AG04450 (cell line): ENCODE measurements at regions of chr5 and their contacts with region 1.

Region 1: DNA sequence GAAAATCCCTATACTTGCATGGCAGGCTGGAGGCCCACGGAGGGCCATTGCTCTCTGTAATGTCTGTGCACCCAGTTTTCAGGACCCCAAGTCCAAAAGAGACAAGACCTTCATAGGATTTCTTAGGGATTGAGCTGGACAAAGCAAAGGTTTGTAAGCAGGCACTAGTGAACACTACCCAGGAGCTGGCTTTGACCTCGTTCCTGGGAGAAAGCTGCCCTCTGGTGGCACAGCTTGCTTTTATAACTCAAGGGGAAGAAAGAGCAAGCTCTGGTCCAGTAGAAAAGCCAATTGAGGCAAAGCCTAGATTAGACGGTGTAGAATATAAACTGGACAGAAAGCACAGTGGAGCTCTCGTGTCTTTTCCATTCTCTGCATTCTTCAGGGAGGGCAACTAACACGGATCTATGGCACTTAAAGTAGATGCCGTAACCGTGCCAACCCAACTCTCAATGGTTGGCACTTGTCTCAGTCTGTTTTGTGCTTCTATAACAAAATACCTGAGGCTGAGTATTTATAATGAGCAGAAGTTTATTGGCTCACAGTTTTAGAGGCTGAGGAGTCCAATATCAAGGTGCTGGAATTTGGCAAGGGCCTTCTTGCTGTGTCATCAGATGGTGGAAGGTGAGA is 7.9 kb downstream of the GABRP start:
- DNase-seq: peak; percentile 3
- H3K4me3 ChIP-seq: no peak overlapping the region
- H3K27ac ChIP-seq: no peak overlapping the region
- H3K27me3 ChIP-seq: no peaks in the 10 kb centered on the region
- CTCF ChIP-seq: peak; percentile 52

Region 2: GRCh38 chr5:170638454-170639220 is 152.8 kb before region 1 on chr5:
- CTCF ChIA-PET with region 1: interaction called, 28 read pairs
- POLR2A ChIA-PET with region 1: no interaction called
- DNase-seq: no peak
- H3K4me3 ChIP-seq: no peak overlapping the region
- H3K27ac ChIP-seq: no peak overlapping the region
- H3K27me3 ChIP-seq: peaks cover 7% of the 10 kb centered on the region
- CTCF ChIP-seq: peak; percentile 86

Region 3: DNA sequence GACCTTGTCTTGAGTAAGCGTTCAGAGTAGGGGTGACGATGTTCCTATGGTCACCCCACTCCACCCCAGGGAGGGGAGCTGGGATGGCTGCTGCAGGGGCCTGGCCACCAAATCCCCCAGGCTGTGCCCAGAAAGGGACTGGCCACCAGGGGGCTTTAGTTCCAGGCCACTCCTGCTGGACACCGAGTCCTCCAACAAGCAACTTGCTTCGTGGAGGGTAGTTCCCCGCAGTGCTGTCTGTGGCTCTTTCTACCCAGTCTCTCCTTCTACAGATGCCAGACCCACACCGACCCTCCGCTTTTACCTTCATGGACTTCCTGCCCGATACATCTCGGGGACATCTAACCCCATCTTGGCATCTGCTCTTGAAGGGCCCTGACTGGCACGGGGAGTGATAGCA is 43.6 kb before region 1 on chr5:
- CTCF ChIA-PET with region 1: interaction called, 143 read pairs
- POLR2A ChIA-PET with region 1: no interaction called
- DNase-seq: no peak
- H3K4me3 ChIP-seq: no peak overlapping the region
- H3K27ac ChIP-seq: no peak overlapping the region
- H3K27me3 ChIP-seq: peaks cover 18% of the 10 kb centered on the region
- CTCF ChIP-seq: peak; percentile 46